Cardiac septum (tissue), 1 donor: ENCODE measurements at regions of chr5 and their contacts with region 1.

Region 1: GRCh38 chr5:78008356-78008967 is 232.3 kb upstream of the TBCA start:
- DNase-seq: no peak

Region 2: DNA sequence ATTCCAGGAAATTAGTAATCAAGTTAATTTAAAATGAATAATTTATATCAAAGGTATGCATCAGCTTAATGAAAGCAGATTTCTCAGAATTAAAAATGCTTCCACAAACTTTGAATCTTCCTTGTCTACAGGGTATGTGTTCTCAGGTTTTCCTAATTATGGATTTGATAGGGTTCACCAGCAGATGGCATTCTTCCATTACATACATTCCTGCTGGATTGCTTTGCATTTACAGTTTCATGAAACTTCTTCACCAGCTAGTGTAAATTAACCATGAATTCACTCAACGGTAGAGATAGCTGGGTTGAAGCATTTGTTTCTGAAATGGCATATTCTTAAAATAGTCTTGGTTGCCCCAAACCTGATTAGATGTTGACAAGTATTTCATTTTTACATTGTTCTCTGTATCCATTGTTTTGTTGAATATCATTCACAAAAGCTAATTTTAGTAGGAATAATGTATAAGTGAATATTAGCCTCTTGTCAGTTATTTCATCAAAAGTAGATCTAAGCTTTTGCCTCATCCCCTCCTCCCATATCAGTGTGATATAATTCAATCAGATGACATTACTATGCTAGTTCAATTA is 447.7 kb before region 1 on chr5:
- intact Hi-C with region 1: loop called (anchors 10 kb)
- DNase-seq: no peak

Region 3: GRCh38 chr5:77924081-77924480 is 84.4 kb before region 1 on chr5:
- intact Hi-C with region 1: no loop called
- DNase-seq: no peak

Region 4: GRCh38 chr5:78056901-78057513 is 48.5 kb after region 1 on chr5:
- intact Hi-C with region 1: no loop called
- DNase-seq: no peak